ENCODE measurements at regions of chr3 and their contacts with region 1.

Region 1: DNA sequence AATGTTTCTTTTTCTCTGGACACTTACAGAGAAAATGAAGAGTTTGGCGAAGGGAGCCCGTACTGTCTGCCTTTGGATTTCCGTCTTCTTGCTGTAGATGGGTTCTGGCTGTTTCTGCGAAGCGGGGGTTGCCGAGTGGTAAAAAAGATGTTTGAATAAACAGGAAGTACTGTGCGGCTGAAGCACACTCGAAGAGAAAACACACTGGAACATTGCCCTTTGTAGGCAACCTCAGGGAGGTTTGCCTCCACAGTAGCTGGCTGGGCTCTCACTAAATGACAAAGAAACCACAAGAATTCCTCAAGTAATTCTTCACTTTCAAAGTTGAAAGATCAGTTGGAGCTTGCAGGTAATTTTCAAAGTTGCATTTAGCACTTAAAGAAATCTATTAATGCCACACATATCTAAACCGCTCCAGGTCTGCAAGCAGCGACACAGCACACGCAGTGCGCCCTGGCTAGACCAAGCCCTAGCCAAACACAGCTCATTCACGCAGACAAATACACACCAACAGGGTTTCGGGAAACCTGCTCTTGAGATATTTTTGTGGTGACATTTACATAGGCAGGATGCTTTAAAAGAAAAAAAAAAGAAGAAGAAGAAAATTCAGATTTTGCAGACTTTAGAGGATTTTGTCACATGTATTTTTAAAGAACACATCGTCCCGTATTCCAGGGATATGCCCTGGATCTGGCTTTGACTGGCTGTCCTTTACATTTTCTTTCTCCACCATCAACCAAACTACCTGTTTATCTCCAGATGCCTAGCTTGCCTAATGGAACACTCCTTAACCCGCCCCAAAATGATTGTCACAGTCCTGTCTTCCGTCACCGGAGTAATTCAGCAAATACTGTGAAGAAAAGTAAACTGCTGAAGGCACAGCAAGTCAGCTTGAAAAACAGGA is 452.8 kb downstream of the FOXP1 start:
- DNase-seq: peak; percentile 56 to 89 (median 73)
- ATAC-seq: peak; percentile 76
- H3K4me3 ChIP-seq: peak overlapping the region; percentile 70
- H3K4me3 Mint-ChIP-seq: peak overlapping the region; percentile 91
- H3K27ac ChIP-seq: peak overlapping the region; percentile 79 to 93
- H3K27ac Mint-ChIP-seq: peak overlapping the region; percentile 98
- H3K4me1 ChIP-seq: peaks cover 53% of the 10 kb centered on the region
- H3K4me1 Mint-ChIP-seq: peaks cover 88% of the 10 kb centered on the region
- H3K27me3 ChIP-seq: no peaks in the 10 kb centered on the region
- H3K27me3 Mint-ChIP-seq: no peaks in the 10 kb centered on the region
- CTCF ChIP-seq: no peak

Region 2: DNA sequence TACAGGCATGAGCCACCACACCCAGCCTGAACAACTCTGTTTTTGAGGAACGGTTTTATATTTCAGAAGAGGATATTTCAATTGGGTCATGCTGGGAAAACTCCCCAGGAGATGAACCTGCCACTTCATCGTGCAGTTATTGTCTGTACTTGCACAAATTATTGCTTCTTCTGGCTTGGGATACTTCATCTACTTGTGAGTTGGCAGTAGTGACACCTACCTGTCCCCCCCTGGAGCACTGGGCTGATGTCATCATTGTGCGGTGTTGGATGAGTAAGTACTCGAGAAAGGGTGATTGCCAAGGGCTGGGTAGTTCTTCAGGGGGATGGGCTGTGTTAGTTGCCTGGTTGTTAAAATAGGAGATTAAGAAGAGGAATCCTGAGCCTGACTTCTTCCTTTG is 1216.3 kb before region 1 on chr3:
- CTCF ChIA-PET with region 1: no interaction called
- POLR2A ChIA-PET with region 1: no interaction called
- intact Hi-C with region 1: no loop called
- DNase-seq: no peak
- ATAC-seq: no peak
- H3K4me3 ChIP-seq: no peak overlapping the region
- H3K4me3 Mint-ChIP-seq: no peak overlapping the region
- H3K27ac ChIP-seq: no peak overlapping the region
- H3K27ac Mint-ChIP-seq: no peak overlapping the region
- H3K4me1 ChIP-seq: no peaks in the 10 kb centered on the region
- H3K4me1 Mint-ChIP-seq: no peaks in the 10 kb centered on the region
- H3K27me3 ChIP-seq: no peaks in the 10 kb centered on the region
- H3K27me3 Mint-ChIP-seq: peaks cover 4% of the 10 kb centered on the region
- CTCF ChIP-seq: no peak

Region 3: DNA sequence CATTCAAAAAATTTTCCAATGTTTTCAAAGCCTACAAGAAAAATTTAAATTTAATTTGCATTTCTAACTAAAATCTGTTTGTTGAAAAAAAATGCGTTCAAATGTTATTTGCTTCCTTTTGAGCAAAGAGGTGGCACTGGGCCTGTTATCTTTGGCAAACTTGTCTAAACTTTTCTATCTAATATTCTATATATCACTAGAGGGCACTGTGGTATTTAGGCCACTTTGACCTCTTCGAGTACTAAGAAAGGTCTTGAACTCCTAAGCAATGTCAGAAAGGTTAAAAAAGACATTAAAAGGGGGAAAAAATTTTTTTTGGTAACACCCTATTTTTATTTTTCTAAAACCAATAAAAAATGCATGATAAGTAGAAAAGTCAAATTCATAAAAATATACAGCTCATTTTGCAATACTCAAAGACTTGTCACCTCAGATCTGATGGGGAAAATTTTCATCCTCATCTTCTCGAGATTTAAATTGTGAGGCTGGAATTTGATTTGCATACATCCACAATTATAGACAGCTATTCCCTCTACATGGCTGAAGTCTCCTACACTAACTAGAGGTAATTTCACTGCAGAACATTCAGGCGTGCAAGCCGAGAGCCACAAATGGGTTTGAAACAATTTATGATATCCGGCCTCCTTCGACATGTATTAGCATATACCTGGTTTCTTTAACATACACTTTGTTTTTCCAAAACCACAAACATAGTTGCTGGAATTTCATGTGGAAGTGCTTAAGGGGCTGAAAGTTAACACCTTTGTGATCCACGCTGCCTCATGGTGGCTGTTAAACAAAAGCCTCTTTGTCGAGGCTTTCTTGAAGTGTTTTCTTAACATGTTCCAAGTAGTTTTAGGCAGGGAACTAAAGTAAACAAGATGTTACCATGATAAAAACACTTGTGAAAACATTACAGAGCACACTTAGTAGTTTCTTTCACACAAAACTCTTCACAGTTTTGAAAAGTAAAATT is 123.6 kb before region 1 on chr3:
- CTCF ChIA-PET with region 1: no interaction called
- POLR2A ChIA-PET with region 1: interaction called, 7 read pairs
- intact Hi-C with region 1: loop called (anchors 2 kb)
- DNase-seq: peak in 3 of 14 experiments; percentile 61 to 66 (median 63)
- ATAC-seq: no peak
- H3K4me3 ChIP-seq: no peak overlapping the region
- H3K4me3 Mint-ChIP-seq: peak overlapping the region; percentile 22
- H3K27ac ChIP-seq: no peak overlapping the region
- H3K27ac Mint-ChIP-seq: peak overlapping the region; percentile 96
- H3K4me1 ChIP-seq: peaks cover 38% of the 10 kb centered on the region
- H3K4me1 Mint-ChIP-seq: peaks cover 83% of the 10 kb centered on the region
- H3K27me3 ChIP-seq: no peaks in the 10 kb centered on the region
- H3K27me3 Mint-ChIP-seq: no peaks in the 10 kb centered on the region
- CTCF ChIP-seq: peak; percentile 76

Region 4: GRCh38 chr3:71087143-71088018 is 43.3 kb before region 1 on chr3:
- CTCF ChIA-PET with region 1: no interaction called
- POLR2A ChIA-PET with region 1: interaction called, 10 read pairs
- intact Hi-C with region 1: loop called (anchors 1 to 5 kb)
- DNase-seq: peak in 10 of 14 experiments; percentile 14 to 86 (median 47)
- ATAC-seq: peak; percentile 77
- H3K4me3 ChIP-seq: peak overlapping the region; percentile 11
- H3K4me3 Mint-ChIP-seq: peak overlapping the region; percentile 69
- H3K27ac ChIP-seq: peak overlapping the region; percentile 57 to 71
- H3K27ac Mint-ChIP-seq: peak overlapping the region; percentile 86
- H3K4me1 ChIP-seq: peaks cover 81% of the 10 kb centered on the region
- H3K4me1 Mint-ChIP-seq: peaks cover 86% of the 10 kb centered on the region
- H3K27me3 ChIP-seq: no peaks in the 10 kb centered on the region
- H3K27me3 Mint-ChIP-seq: no peaks in the 10 kb centered on the region
- CTCF ChIP-seq: no peak

Region 5: DNA sequence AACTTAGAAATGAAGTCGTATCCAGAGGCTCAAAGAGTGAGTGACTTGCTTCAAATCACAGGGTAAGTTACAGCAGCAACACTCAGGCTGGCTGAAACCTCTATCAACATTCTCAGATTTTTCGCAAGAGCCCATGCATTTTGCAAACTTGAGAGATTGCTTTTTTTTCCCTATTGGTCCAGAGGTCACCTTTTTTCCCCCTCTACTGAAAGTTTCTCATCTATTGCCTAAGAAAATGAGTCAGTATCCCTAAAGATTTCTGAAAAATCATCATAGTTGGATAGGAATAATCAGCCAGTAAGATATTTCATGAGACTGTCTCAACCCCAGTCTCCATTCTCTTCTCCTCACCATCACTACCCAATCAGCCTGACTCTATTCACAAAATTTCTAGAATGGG is 42.2 kb after region 1 on chr3:
- CTCF ChIA-PET with region 1: no interaction called
- POLR2A ChIA-PET with region 1: no interaction called
- intact Hi-C with region 1: loop called in 1 of 2 experiments (anchors 5 kb)
- DNase-seq: no peak
- ATAC-seq: no peak
- H3K4me3 ChIP-seq: no peak overlapping the region
- H3K4me3 Mint-ChIP-seq: no peak overlapping the region
- H3K27ac ChIP-seq: no peak overlapping the region
- H3K27ac Mint-ChIP-seq: peak overlapping the region; percentile 45
- H3K4me1 ChIP-seq: no peaks in the 10 kb centered on the region
- H3K4me1 Mint-ChIP-seq: peaks cover 61% of the 10 kb centered on the region
- H3K27me3 ChIP-seq: no peaks in the 10 kb centered on the region
- H3K27me3 Mint-ChIP-seq: no peaks in the 10 kb centered on the region
- CTCF ChIP-seq: no peak

Region 6: DNA sequence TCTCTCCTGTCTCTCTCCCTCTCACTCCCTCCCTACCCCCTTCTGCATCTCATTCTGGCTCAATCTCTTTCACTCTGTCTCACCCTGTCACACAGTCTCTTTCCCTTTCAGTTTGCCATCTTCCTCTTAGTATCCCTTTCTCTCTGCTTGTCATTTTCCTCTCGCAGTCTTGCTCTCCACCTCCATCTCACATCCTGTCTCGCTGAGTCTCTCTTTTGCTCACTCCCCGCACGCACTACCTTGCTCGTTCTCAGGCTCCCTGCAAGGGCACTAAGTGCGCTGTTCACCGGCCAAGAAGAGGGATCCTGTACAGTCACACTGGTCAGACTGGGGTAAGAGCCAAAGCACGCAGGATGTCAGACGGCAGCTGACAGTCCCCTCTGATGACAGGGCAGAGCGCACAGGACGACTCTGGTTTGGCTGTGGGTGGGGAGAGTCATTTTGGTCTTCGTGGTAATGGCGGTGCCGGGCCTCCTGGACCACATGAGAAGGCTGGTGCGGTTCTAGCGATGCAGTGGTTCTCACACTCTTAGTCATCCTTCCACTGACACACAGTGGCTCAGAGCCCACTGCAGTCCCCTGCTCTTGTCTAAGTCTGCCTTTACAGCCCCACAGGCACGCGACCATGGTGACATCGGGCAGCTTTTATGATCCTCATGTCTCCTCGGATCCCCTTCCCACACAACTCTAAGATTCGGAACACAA is 96.0 kb after region 1 on chr3:
- CTCF ChIA-PET with region 1: no interaction called
- POLR2A ChIA-PET with region 1: interaction called, 7 read pairs
- intact Hi-C with region 1: loop called in 1 of 2 experiments (anchors 1 kb)
- DNase-seq: peak; percentile 52 to 87 (median 72)
- ATAC-seq: peak; percentile 71
- H3K4me3 ChIP-seq: peak overlapping the region; percentile 55
- H3K4me3 Mint-ChIP-seq: peak overlapping the region; percentile 69
- H3K27ac ChIP-seq: peak overlapping the region; percentile 59 to 68
- H3K27ac Mint-ChIP-seq: peak overlapping the region; percentile 87
- H3K4me1 ChIP-seq: peaks cover 24% of the 10 kb centered on the region
- H3K4me1 Mint-ChIP-seq: peaks cover 85% of the 10 kb centered on the region
- H3K27me3 ChIP-seq: no peaks in the 10 kb centered on the region
- H3K27me3 Mint-ChIP-seq: no peaks in the 10 kb centered on the region
- CTCF ChIP-seq: no peak

Measured in CD4-positive, alpha-beta T cell (primary cell).